GM13977 (cell line): ENCODE measurements at regions of chr6 and their contacts with region 1.

Region 1: DNA sequence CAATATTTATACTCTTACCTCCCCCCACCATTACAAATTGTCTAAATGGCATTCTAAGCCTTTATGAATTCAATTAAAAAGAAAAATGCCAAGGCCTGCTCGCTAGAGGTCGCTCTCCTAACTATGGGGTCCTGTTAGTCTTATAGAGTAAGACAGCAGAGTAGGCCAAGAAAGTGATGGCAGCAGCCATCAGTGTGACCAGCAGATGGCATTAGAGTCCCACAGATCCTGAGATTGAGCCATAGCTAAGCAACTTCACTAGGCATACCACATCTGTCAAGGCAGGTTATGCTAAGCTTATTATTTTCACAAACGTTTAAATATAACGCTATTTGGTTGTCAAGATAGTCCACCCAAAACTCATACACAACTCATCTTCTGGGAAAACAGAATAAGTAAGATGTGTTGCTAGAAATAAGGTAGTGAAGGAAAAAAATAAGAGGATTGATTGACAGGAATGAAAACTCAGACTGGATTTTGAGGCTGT is 57.6 kb upstream of the SCAF8 start:
- DNase-seq: peak; percentile 89
- CTCF ChIP-seq: peak; percentile 96

Region 2: DNA sequence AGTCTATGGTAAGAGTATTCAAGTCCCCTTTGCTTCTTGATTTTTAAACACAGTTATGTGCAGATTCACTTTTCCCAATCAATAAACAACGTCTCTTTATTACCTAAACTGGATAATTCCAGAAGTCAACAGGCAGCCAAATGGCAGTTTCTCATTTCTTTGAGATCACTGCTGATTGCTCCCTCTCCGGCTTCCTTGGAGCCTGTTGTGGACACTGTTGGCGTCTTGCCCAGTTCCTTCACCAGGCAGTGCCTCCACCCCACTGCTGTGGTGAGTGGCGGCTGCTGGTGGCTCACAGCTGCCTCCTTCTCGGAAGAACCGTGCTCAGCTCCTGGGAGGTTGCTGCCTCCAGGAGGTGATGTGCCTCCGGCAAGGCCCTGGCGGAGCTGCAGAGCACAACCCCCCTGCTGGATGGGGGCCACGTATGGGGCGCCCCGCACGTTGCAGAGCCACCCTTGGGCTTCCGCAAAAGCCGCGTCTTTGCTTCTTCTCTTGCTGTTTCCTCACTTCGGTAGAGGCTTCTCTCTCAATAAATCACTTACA is 60.1 kb before region 1 on chr6:
- in situ Hi-C with region 1: no loop called
- DNase-seq: no peak
- CTCF ChIP-seq: no peak

Region 3: DNA sequence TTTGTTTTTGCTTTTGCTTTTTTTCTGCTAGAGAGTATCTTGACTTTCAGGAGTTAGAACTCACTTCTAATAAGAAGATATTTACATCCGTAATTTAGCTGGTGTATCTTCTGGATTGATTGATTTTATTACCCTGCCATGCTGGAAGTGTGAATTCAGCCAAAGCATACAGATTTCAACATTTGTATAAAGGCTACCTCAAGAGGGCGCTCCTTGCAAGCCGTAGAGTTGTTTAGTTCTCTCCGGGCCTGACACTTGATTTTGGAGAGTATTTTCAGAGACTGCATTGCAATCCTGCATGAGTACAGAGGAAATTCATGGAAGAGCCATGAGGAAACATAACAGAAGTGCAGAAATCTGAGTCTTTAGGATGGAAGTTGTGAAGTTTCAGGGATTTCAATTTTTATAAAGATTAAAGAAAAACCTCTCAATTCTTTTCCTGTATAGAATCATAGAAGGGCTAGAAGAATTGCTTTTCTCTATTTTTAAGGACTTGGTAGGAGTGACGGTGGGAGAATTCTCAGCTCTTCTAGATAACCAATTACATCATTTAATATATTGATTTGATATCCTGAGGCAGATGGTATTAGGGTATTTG is 252.8 kb after region 1 on chr6:
- in situ Hi-C with region 1: loop called (anchors 10 kb)
- DNase-seq: peak; percentile 71
- CTCF ChIP-seq: peak; percentile 76

Region 4: GRCh38 chr6:155013457-155013876 is 337.8 kb after region 1 on chr6:
- in situ Hi-C with region 1: no loop called
- DNase-seq: no peak
- CTCF ChIP-seq: no peak

Region 5: GRCh38 chr6:155174576-155175211 is 499.0 kb after region 1 on chr6:
- in situ Hi-C with region 1: loop called (anchors 10 kb)
- DNase-seq: peak; percentile 63
- CTCF ChIP-seq: peak; percentile 69

Region 6: DNA sequence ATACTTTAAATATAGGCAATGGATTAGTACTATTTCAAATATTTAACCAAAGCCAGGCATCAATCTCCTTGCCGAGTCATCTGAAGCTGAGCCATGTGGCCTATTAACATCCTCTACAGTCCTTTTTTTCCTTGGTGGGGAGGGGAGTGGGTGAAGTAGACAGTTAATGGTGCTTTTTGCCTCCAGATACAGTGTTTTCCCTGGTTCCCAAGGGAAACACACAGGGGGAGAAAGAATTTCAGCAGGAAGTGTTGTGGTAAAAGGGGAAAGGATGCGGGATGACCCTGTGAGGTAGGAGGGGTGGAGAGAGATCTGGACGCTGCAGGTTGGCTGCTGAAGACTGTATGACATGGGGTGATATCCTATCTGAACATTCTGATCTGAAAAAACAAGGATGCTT is 597.8 kb after region 1 on chr6:
- in situ Hi-C with region 1: loop called (anchors 25 kb)
- DNase-seq: no peak
- CTCF ChIP-seq: no peak